ENCODE measurements at regions of chr16 and their contacts with region 1.

Region 1: GRCh38 chr16:81737885-81738786 is 41.0 kb upstream of the PLCG2 start:
- DNase-seq: peak; percentile 86 to 91
- H3K4me3 ChIP-seq: no peak overlapping the region
- H3K27ac ChIP-seq: no peak overlapping the region
- H3K4me1 ChIP-seq: no peaks in the 10 kb centered on the region; the same call in 1 of the 2 replicates
- H3K27me3 ChIP-seq: no peaks in the 10 kb centered on the region
- CTCF ChIP-seq: peak; percentile 91

Region 2: GRCh38 chr16:80924372-80924978 is 813.7 kb before region 1 on chr16:
- CTCF ChIA-PET with region 1: no interaction called
- POLR2A ChIA-PET with region 1: no interaction called
- intact Hi-C with region 1: loop called (anchors 5 kb)
- DNase-seq: peak in 1 of 2 experiments; percentile 50
- H3K4me3 ChIP-seq: no peak overlapping the region
- H3K27ac ChIP-seq: no peak overlapping the region
- H3K4me1 ChIP-seq: no peaks in the 10 kb centered on the region
- H3K27me3 ChIP-seq: peaks cover 18% of the 10 kb centered on the region; the same call in 1 of the 2 replicates
- CTCF ChIP-seq: peak; percentile 42

Region 3: GRCh38 chr16:81261049-81261648 is 477.0 kb before region 1 on chr16:
- CTCF ChIA-PET with region 1: no interaction called
- POLR2A ChIA-PET with region 1: no interaction called
- intact Hi-C with region 1: loop called (anchors 10 kb)
- DNase-seq: no peak
- H3K4me3 ChIP-seq: no peak overlapping the region
- H3K27ac ChIP-seq: no peak overlapping the region
- H3K4me1 ChIP-seq: peaks cover 6% of the 10 kb centered on the region
- H3K27me3 ChIP-seq: no peaks in the 10 kb centered on the region
- CTCF ChIP-seq: peak; percentile 77

Region 4: DNA sequence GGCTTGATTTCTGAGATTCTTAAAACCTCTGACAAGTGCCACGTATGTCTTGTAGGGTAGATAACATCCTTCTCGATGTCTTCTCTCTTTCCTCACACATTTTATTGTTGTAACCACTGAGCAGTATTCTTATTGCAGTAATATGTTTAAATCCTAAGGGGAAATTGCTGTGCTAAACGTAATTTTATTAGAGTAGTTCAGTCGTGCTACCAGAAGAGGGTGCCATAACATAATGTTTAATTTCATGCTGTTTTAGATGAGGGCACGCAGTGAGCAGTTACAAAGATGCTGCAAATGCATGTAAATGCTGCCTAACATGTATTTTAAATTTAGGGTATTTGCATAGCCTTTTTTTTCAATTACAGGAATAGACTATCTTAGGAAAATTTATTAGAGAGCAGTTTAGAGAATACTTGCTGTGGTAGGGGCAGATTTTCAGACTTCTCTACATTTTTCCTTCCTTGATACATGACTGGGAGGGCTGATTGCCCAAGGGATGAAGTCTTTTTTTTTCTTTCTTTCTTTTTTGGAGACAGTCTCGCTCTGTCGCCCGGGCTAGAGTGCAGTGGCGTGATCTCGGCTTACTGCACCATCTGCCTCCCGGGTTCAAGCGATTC is 371.7 kb before region 1 on chr16:
- CTCF ChIA-PET with region 1: interaction called, 3 read pairs
- POLR2A ChIA-PET with region 1: no interaction called
- intact Hi-C with region 1: loop called (anchors 1 kb)
- DNase-seq: no peak
- H3K4me3 ChIP-seq: no peak overlapping the region
- H3K27ac ChIP-seq: no peak overlapping the region
- H3K4me1 ChIP-seq: no peaks in the 10 kb centered on the region
- H3K27me3 ChIP-seq: no peaks in the 10 kb centered on the region
- CTCF ChIP-seq: peak; percentile 91

Region 5: DNA sequence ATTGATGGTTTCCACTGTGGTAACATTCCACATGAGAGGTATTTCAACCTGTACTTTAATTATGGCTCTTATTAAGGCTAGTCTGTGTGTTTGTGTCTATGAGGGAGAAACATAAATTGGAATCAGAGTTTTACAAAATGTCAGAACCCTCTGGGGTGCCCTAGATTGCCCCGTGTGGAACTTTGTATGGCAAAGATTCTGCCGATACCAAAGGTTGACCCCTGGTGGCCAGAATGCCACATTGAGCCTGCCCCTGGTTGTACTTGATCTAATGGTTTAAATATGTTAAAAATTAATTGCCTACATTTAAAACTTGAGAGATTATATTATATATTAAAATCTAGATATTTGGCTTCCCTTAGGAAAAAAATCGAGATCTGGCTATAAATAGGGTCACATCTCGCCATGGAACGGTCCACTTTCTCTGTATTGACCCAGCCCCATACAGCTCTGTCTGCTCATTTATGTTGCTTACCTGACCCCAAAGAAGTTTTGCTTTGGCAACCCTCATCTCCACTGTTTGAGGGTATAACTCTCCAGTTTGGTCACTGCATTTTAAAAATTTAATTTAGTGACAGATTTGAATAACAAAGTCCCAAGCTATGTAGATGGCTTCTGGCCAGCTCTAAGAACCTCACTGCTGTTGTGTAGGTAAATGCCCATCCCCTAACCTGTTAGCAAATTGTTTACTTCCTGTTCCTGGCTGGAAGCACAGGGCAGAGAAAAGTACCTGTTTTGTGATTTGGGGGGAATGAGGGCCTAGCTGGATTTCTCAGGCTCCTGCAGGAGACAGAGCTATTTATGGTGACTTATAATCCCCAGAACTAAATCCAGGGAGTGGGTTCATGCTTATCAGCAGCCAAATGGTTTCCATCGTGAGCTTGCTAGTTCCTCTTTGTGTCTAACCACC is 136.0 kb after region 1 on chr16:
- CTCF ChIA-PET with region 1: no interaction called
- POLR2A ChIA-PET with region 1: no interaction called
- intact Hi-C with region 1: loop called (anchors 5 kb)
- DNase-seq: peak in 1 of 2 experiments; percentile 53
- H3K4me3 ChIP-seq: no peak overlapping the region
- H3K27ac ChIP-seq: no peak overlapping the region
- H3K4me1 ChIP-seq: no peaks in the 10 kb centered on the region
- H3K27me3 ChIP-seq: no peaks in the 10 kb centered on the region
- CTCF ChIP-seq: peak; percentile 86

Region 6: DNA sequence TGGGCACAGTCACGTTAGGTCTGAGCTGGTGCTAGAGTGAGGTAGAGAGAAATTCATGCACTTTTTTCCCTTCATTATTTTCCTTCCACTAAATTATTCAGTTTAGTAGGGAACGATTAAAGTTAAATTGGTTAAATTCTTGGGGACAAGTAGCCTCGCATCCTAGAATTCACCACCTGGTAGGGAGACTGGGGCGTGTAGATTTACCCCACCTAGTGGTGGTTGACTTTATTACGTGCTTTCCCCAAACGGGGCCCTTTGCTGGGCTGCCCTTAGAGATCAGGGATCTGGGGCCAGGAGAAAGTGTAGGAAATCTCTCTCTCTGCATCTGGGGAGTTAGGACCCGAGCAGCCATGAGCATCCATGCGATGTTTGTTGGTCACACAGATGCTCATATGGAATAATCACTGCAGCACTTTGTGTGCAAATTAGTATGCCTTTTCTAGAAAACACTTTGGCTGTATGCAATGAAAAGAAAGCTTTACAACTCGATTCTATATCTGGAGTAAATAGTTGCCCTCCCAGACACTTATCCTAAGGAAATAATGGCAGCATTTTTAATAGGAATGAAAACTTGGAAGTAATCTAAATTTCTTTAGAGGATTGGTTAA is 147.9 kb after region 1 on chr16:
- CTCF ChIA-PET with region 1: interaction called, 4 read pairs
- POLR2A ChIA-PET with region 1: no interaction called
- intact Hi-C with region 1: loop called (anchors 5 kb)
- DNase-seq: peak in 1 of 2 experiments; percentile 37
- H3K4me3 ChIP-seq: no peak overlapping the region
- H3K27ac ChIP-seq: no peak overlapping the region
- H3K4me1 ChIP-seq: 0 out of 2 replicates have a peak, but pooled peaks cover 12% of the 10 kb centered on the region
- H3K27me3 ChIP-seq: no peaks in the 10 kb centered on the region
- CTCF ChIP-seq: peak; percentile 80

Measured in PC-9 (cell line).